Pancreas (tissue), 10 donors: ENCODE measurements at regions of chr9 and their contacts with region 1.

Region 1: DNA sequence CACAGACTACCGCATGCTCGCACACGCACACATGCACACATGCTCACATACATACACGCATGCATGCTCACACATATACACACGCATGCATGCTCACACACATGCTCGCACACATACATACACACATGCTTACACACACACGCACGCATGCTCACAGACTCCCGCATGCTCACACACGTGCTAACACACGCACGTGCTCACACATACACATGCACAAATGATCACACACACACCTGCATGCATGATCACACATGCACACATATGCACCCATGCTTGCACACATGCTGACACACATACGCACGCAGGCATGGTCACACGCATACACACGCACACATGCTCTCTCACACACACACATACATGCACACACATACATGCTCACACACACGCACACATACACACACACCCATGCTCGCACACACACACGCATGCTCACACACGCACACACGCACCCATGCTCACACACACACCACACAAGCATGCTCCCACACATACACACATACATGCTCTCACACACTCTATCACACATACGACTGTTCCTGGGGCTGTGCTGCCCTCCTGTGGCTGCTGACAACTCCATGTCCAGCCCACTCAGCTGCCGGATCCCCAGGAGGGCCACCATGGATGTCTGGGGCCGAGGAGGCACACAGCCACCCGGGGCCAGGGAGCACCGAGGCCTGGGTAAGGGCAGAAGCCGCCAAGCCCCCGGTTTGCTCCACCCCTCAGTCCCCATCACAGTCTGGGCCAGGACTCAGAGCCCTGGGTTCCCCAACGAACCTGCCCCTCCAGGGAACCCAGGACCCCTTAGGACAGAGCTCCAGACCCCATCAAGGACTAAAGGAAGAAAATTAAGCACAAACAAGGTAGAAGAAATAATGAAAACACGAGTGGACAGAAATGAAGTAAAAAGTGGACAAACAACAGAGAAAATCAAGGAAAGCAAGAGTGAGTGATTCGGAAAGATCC is 31.4 kb upstream of the EGFL7 start:
- DNase-seq: peak; percentile 68 to 91 (median 83)
- ATAC-seq: peak; percentile 59 to 84 (median 70)
- H3K4me3 ChIP-seq: no peak overlapping the region
- H3K27ac ChIP-seq: no peak overlapping the region
- H3K4me1 ChIP-seq: peaks cover 18 to 34% (median 28%) of the 10 kb centered on the region in 3 donors
- H3K27me3 ChIP-seq: no peaks in the 10 kb centered on the region
- CTCF ChIP-seq: peak; percentile 56 to 72 (median 60)

Region 2: GRCh38 chr9:136312436-136312835 is 318.9 kb before region 1 on chr9:
- intact Hi-C with region 1: loop called in 1 of 3 experiments (anchors 10 kb)
- DNase-seq: peak in 4 of 6 donors; percentile 52 to 79 (median 68)
- ATAC-seq: peak; percentile 78 to 92 (median 79)
- H3K4me3 ChIP-seq: no peak overlapping the region
- H3K27ac ChIP-seq: no peak overlapping the region
- H3K4me1 ChIP-seq: no peaks in the 10 kb centered on the region
- H3K27me3 ChIP-seq: no peaks in the 10 kb centered on the region
- CTCF ChIP-seq: peak in 2 of 4 donors; percentile 42 to 43

Region 3: GRCh38 chr9:136400038-136400834 is 231.1 kb before region 1 on chr9 and contains the start of gene SNAPC4:
- intact Hi-C with region 1: loop called in 1 of 3 experiments (anchors 5 kb)
- DNase-seq: peak; percentile 75 to 97 (median 91)
- ATAC-seq: peak; percentile 95 to 98 (median 96)
- H3K4me3 ChIP-seq: peak within 1 kb of the TSS; percentile 89 to 99 (median 95)
- H3K27ac ChIP-seq: no peak within 1 kb of the TSS
- H3K4me1 ChIP-seq: peaks cover 0 to 11% (median 7%) of the 10 kb centered on the region in 3 donors
- H3K27me3 ChIP-seq: no peaks in the 10 kb centered on the region
- CTCF ChIP-seq: peak; percentile 88 to 98 (median 94)
- total RNA-seq, gene SNAPC4: 3.8 to 6.4 (median 4.7) TPM

Region 4: DNA sequence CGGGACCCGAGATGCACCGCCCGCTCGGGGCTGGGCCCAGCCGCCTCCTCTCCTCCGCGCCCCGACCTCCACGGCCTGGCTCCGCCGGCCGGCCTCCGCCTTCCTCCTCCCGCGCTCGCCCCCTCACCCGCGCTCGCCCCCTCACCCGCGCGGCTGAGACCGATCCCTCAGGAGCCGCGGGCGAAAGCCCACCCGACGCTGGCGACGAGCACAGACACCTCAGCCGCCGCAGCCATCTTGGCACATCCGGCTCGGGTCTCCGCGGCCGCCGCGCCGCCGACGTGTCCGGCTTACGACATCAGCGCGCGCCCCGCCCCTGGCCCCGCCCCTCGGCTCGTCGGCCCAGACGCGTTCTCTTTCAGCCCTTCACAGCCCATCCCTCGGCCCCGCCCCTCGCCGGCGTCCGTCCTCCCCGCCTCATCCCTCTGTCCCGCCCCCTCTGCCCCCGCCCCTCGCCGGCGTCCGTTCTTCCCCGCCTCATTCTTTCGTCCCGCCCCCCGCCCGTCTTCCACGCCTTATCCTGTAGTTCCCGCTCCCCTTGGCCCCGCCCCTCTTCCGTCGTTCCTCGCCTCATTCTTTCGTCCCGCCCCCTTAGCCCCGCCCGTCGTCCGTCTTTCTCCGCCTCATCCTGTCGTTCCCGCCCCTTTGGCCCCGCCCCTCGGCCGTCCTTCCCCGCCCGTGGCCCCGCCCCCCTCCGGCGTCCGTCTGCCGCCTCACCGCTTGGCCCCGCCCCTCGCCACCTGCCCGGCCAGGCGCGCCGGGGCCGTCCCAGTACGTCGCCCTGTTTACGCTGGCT is 148.3 kb before region 1 on chr9 and contains the start of gene SEC16A:
- intact Hi-C with region 1: loop called in 2 of 3 experiments (anchors 2 kb)
- DNase-seq: peak; percentile 99 to 100 (median 100)
- ATAC-seq: peak; percentile 69 to 84 (median 76)
- H3K4me3 ChIP-seq: peak within 1 kb of the TSS; percentile 70 to 99 (median 94)
- H3K27ac ChIP-seq: peak within 1 kb of the TSS; percentile 99 to 100 (median 99)
- H3K4me1 ChIP-seq: peaks cover 15 to 28% (median 22%) of the 10 kb centered on the region in 3 donors
- H3K27me3 ChIP-seq: no peaks in the 10 kb centered on the region
- CTCF ChIP-seq: no peak
- total RNA-seq, gene SEC16A: 32.1 to 46.6 (median 39.5) TPM

Region 5: GRCh38 chr9:136494531-136495215 is 136.6 kb before region 1 on chr9:
- intact Hi-C with region 1: loop called in 1 of 3 experiments (anchors 5 kb)
- DNase-seq: no peak
- ATAC-seq: no peak
- H3K4me3 ChIP-seq: no peak overlapping the region
- H3K27ac ChIP-seq: no peak overlapping the region
- H3K4me1 ChIP-seq: peaks cover 8 to 15% (median 10%) of the 10 kb centered on the region in 3 donors
- H3K27me3 ChIP-seq: no peaks in the 10 kb centered on the region
- CTCF ChIP-seq: no peak

Region 6: GRCh38 chr9:136539427-136540421 is 91.6 kb before region 1 on chr9:
- intact Hi-C with region 1: loop called in 1 of 3 experiments (anchors 5 kb)
- DNase-seq: peak in 5 of 6 donors; percentile 83 to 97 (median 88)
- ATAC-seq: peak; percentile 11 to 82 (median 58)
- H3K4me3 ChIP-seq: peak overlapping the region in 1 of 4 donors; percentile 24
- H3K27ac ChIP-seq: peak overlapping the region; percentile 38 to 93 (median 64)
- H3K4me1 ChIP-seq: peaks cover 12 to 29% (median 19%) of the 10 kb centered on the region in 3 donors
- H3K27me3 ChIP-seq: no peaks in the 10 kb centered on the region
- CTCF ChIP-seq: no peak